ENCODE measurements at regions of chr3 and their contacts with region 1.

Region 1: GRCh38 chr3:120095226-120095978 is 1.2 kb upstream of the GSK3B start:
- DNase-seq: peak; percentile 85 to 94 (median 87)
- H3K4me3 ChIP-seq: peak overlapping the region; percentile 37 to 83
- H3K4me3 Mint-ChIP-seq: peak overlapping the region in 1 of 8 donors; percentile 95
- H3K27ac ChIP-seq: peak overlapping the region; percentile 96
- H3K27ac Mint-ChIP-seq: peak overlapping the region in 1 of 7 donors; percentile 98
- H3K4me1 ChIP-seq: peaks cover 33% of the 10 kb centered on the region
- H3K4me1 Mint-ChIP-seq: peaks cover 12 to 42% (median 21%) of the 10 kb centered on the region in 4 donors
- H3K27me3 ChIP-seq: no peaks in the 10 kb centered on the region
- H3K27me3 Mint-ChIP-seq: peaks cover 0 to 2% of the 10 kb centered on the region in 2 donors

Region 2: DNA sequence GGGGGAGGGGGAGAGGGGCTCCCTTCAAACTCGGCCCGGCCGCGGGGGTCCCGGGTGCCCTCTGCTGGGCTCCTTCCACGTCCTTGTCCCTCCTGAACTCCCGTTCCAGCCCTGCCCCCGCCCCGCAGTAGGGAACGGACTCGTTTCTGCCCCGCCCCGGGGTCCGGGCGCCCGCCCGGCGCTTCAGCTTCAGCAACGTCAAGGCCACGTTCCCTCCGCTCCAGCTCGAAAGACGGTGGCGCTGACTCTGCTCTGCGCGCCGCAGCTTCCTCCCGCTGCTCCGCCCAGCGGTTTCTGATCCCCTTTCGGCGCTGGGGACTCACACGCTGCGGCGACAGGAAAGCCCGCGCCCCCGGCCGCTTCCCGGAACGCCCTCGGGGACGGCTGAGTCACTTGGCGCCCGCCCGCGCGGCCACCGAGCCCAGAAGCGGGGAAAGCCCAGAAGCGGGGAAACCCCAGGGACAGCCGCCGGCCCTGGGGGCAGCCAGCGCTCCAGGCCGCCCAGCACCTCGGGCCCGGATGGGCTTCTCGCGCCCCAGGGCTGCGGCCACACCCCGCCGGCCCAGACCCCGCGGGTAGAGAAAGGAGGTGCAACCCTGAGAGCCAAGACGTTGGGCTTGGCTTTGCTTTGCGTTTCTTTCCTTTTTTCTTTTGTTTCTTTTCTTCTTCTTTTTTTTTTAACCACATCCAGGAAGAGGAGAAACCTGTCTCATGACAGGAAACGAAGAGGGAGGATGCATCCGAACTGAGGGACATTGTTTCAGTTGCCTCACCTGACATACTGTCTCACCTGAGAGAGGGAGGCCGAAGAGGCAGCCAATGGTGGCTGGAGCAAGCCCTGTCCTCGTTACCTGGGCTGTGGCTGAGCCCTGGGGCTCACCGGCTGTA is 772.3 kb before region 1 on chr3:
- CTCF ChIA-PET with region 1: no interaction called
- POLR2A ChIA-PET with region 1: interaction called, 3 read pairs
- intact Hi-C with region 1: loop called (anchors 10 kb)
- DNase-seq: peak; percentile 87 to 95 (median 89)
- H3K4me3 ChIP-seq: peak overlapping the region; percentile 20 to 73
- H3K4me3 Mint-ChIP-seq: peak overlapping the region; percentile 88 to 96 (median 90)
- H3K27ac ChIP-seq: peak overlapping the region; percentile 75
- H3K27ac Mint-ChIP-seq: peak overlapping the region; percentile 93 to 99 (median 97)
- H3K4me1 ChIP-seq: peaks cover 19% of the 10 kb centered on the region
- H3K4me1 Mint-ChIP-seq: peaks cover 13 to 38% (median 27%) of the 10 kb centered on the region in 4 donors
- H3K27me3 ChIP-seq: no peaks in the 10 kb centered on the region
- H3K27me3 Mint-ChIP-seq: no peaks in the 10 kb centered on the region

Region 3: GRCh38 chr3:119676771-119677640 is 418.4 kb before region 1 on chr3 and contains the start of gene COX17:
- CTCF ChIA-PET with region 1: no interaction called
- POLR2A ChIA-PET with region 1: interaction called, 10 read pairs
- intact Hi-C with region 1: loop called (anchors 1 kb)
- DNase-seq: peak; percentile 94 to 99 (median 97)
- H3K4me3 ChIP-seq: peak within 1 kb of the TSS; percentile 72 to 89
- H3K4me3 Mint-ChIP-seq: peak within 1 kb of the TSS; percentile 83 to 97 (median 91)
- H3K27ac ChIP-seq: peak within 1 kb of the TSS; percentile 69
- H3K27ac Mint-ChIP-seq: peak within 1 kb of the TSS; percentile 87 to 99 (median 96)
- H3K4me1 ChIP-seq: peaks cover 34% of the 10 kb centered on the region
- H3K4me1 Mint-ChIP-seq: peaks cover 27 to 42% (median 32%) of the 10 kb centered on the region in 4 donors
- H3K27me3 ChIP-seq: no peaks in the 10 kb centered on the region
- H3K27me3 Mint-ChIP-seq: no peaks in the 10 kb centered on the region
- total RNA-seq, gene COX17: 46.1 to 48.9 TPM

Region 4: DNA sequence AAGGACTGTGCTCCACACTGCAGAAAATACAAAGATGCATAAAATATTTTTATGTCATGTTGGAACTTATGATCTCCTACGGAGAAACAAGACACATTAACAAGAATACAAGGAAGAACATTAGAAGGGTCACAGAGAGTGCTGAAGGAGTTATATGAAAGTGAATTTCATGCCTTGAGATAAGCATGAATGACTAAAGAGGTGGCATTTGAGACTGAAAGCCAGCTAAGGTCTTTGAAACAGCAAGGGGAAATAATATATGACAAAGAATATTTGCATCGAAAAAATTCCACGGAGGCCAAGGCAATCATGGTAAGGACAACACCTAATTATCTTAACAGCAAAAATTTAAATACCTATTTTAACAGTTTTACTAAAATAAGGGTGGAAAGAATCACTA is 13.7 kb before region 1 on chr3:
- CTCF ChIA-PET with region 1: interaction called, 3 read pairs
- POLR2A ChIA-PET with region 1: interaction called, 16 read pairs
- intact Hi-C with region 1: no loop called
- DNase-seq: no peak
- H3K4me3 ChIP-seq: no peak overlapping the region
- H3K4me3 Mint-ChIP-seq: peak overlapping the region in 3 of 8 donors; percentile 4 to 26 (median 17)
- H3K27ac ChIP-seq: no peak overlapping the region
- H3K27ac Mint-ChIP-seq: peak overlapping the region in 5 of 7 donors; percentile 0 to 76 (median 48)
- H3K4me1 ChIP-seq: peaks cover 78% of the 10 kb centered on the region
- H3K4me1 Mint-ChIP-seq: peaks cover 45 to 79% (median 61%) of the 10 kb centered on the region in 4 donors
- H3K27me3 ChIP-seq: no peaks in the 10 kb centered on the region
- H3K27me3 Mint-ChIP-seq: no peaks in the 10 kb centered on the region

Region 5: DNA sequence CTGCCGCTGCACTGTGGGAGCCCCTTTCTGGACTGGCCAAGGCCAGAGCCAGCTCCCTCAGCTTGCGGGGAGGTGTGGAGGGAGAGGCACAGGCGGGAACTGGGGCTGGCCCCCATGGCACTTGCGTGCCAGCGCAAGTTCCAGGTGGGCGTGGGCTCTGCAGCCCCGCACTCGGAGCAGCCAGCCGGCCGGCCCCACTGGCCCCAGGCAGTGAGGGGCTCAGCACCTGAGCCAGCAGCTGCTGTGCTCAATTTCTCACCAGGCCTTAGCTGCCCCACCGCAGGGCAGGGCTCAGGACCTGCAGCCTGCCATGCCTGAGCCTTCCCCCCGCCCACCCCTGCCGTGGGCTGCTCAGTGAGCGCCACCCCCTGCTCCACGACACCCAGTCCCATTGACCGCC is 194.2 kb after region 1 on chr3:
- CTCF ChIA-PET with region 1: no interaction called
- POLR2A ChIA-PET with region 1: no interaction called
- intact Hi-C with region 1: no loop called
- DNase-seq: no peak
- H3K4me3 ChIP-seq: no peak overlapping the region
- H3K4me3 Mint-ChIP-seq: no peak overlapping the region
- H3K27ac ChIP-seq: no peak overlapping the region
- H3K27ac Mint-ChIP-seq: no peak overlapping the region
- H3K4me1 ChIP-seq: no peaks in the 10 kb centered on the region
- H3K4me1 Mint-ChIP-seq: peaks cover 0 to 8% (median 2%) of the 10 kb centered on the region in 4 donors
- H3K27me3 ChIP-seq: peaks cover 5% of the 10 kb centered on the region
- H3K27me3 Mint-ChIP-seq: peaks cover 24 to 31% of the 10 kb centered on the region in 2 donors

Region 6: DNA sequence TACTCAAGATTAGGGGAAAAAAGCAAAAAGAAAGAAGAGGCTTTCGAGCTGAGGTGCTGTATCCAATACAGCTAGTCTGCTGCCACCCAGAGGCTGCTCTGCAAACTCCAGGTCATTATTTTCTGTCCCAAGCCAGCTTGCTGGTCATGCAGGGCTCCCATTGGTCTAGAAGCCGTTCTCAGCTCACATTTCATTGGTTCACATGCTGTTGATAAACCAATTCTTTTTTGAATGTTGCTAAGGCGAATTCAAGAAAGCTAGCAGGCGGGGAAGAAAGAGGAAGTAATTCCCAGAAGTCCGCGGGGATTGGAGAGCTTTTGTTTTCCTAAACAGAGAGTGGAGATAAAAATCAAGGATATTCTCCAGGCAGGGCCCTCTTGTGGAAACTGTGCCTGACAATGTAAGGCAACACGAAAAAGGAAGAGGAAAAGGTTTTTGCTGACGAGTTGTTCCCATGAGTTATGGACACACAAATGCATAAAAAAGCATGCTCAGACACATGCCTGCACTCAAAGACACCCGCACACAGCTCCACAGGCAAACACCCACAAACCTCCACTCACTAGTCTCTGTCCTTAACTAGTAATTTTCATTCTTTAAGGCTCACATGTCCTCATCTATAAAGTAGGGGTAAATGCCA is 322.0 kb after region 1 on chr3:
- CTCF ChIA-PET with region 1: interaction called, 5 read pairs
- POLR2A ChIA-PET with region 1: no interaction called
- intact Hi-C with region 1: loop called (anchors 5 kb)
- DNase-seq: peak; percentile 78 to 83 (median 80)
- H3K4me3 ChIP-seq: peak overlapping the region; percentile 43 to 59
- H3K4me3 Mint-ChIP-seq: peak overlapping the region; percentile 82 to 94 (median 87)
- H3K27ac ChIP-seq: no peak overlapping the region
- H3K27ac Mint-ChIP-seq: peak overlapping the region in 5 of 7 donors; percentile 23 to 86 (median 81)
- H3K4me1 ChIP-seq: peaks cover 10% of the 10 kb centered on the region
- H3K4me1 Mint-ChIP-seq: peaks cover 11 to 25% (median 12%) of the 10 kb centered on the region in 4 donors
- H3K27me3 ChIP-seq: no peaks in the 10 kb centered on the region
- H3K27me3 Mint-ChIP-seq: peaks cover 0 to 7% of the 10 kb centered on the region in 2 donors

Region 7: GRCh38 chr3:120742198-120742849 is 646.9 kb after region 1 on chr3 and contains the starts of genes GTF2E1 and RABL3:
- CTCF ChIA-PET with region 1: no interaction called
- POLR2A ChIA-PET with region 1: interaction called, 10 read pairs
- intact Hi-C with region 1: loop called (anchors 1 kb)
- DNase-seq: peak; percentile 96 to 99 (median 97)
- H3K4me3 ChIP-seq: peak within 1 kb of the TSS; percentile 83 to 92
- H3K4me3 Mint-ChIP-seq: peak within 1 kb of the TSS; percentile 89 to 98 (median 96)
- H3K27ac ChIP-seq: peak within 1 kb of the TSS; percentile 98
- H3K27ac Mint-ChIP-seq: peak within 1 kb of the TSS; percentile 96 to 99 (median 98)
- H3K4me1 ChIP-seq: peaks cover 34% of the 10 kb centered on the region
- H3K4me1 Mint-ChIP-seq: peaks cover 21 to 58% (median 39%) of the 10 kb centered on the region in 4 donors
- H3K27me3 ChIP-seq: no peaks in the 10 kb centered on the region
- H3K27me3 Mint-ChIP-seq: no peaks in the 10 kb centered on the region
- total RNA-seq, gene GTF2E1: 30.0 to 30.2 TPM
- total RNA-seq, gene RABL3: 31.9 to 33.0 TPM

Measured in CD4-positive, alpha-beta memory T cell (primary cell).